ENCODE measurements at regions of chr1 and their contacts with region 1.

Region 1: GRCh38 chr1:225754940-225755641 is 22.5 kb upstream of the SRP9 start:
- DNase-seq: peak; percentile 84 to 94
- H3K4me3 ChIP-seq: no peak overlapping the region
- H3K4me3 Mint-ChIP-seq: no peak overlapping the region
- H3K27ac Mint-ChIP-seq: peak overlapping the region; percentile 75
- H3K4me1 ChIP-seq: peaks cover 39% of the 10 kb centered on the region
- H3K4me1 Mint-ChIP-seq: peaks cover 35% of the 10 kb centered on the region
- H3K27me3 ChIP-seq: no peaks in the 10 kb centered on the region
- H3K27me3 Mint-ChIP-seq: no peaks in the 10 kb centered on the region
- CTCF ChIP-seq: no peak

Region 2: GRCh38 chr1:225660544-225660946 is 94.5 kb before region 1 on chr1:
- CTCF ChIA-PET with region 1: no interaction called
- POLR2A ChIA-PET with region 1: no interaction called
- intact Hi-C with region 1: no loop called
- DNase-seq: no peak
- H3K4me3 ChIP-seq: no peak overlapping the region
- H3K4me3 Mint-ChIP-seq: no peak overlapping the region
- H3K27ac Mint-ChIP-seq: no peak overlapping the region
- H3K4me1 ChIP-seq: 0 out of 2 replicates have a peak, but pooled peaks cover 2% of the 10 kb centered on the region
- H3K4me1 Mint-ChIP-seq: peaks cover 4% of the 10 kb centered on the region
- H3K27me3 ChIP-seq: no peaks in the 10 kb centered on the region
- H3K27me3 Mint-ChIP-seq: no peaks in the 10 kb centered on the region
- CTCF ChIP-seq: no peak

Region 3: GRCh38 chr1:225794954-225795353 is 39.9 kb after region 1 on chr1:
- CTCF ChIA-PET with region 1: no interaction called
- POLR2A ChIA-PET with region 1: interaction called, 10 read pairs
- intact Hi-C with region 1: no loop called
- DNase-seq: no peak
- H3K4me3 ChIP-seq: no peak overlapping the region
- H3K4me3 Mint-ChIP-seq: no peak overlapping the region
- H3K27ac Mint-ChIP-seq: no peak overlapping the region
- H3K4me1 ChIP-seq: no peaks in the 10 kb centered on the region
- H3K4me1 Mint-ChIP-seq: no peaks in the 10 kb centered on the region
- H3K27me3 ChIP-seq: no peaks in the 10 kb centered on the region
- H3K27me3 Mint-ChIP-seq: no peaks in the 10 kb centered on the region
- CTCF ChIP-seq: no peak

Measured in Caco-2 (cell line).